ENCODE measurements at regions of chr16 and their contacts with region 1.

Region 1: GRCh38 chr16:68244903-68245853 is at the start of gene PLA2G15:
- DNase-seq: peak; percentile 98
- ATAC-seq: peak; percentile 97
- H3K4me3 ChIP-seq: peak within 1 kb of the TSS; percentile 98
- H3K27ac ChIP-seq: peak within 1 kb of the TSS; percentile 74
- H3K4me1 ChIP-seq: peaks cover 22% of the 10 kb centered on the region
- H3K27me3 ChIP-seq: no peaks in the 10 kb centered on the region
- CTCF ChIP-seq: no peak
- total RNA-seq, gene PLA2G15: 30.4 TPM

Region 2: GRCh38 chr16:67979955-67980678 is 265.1 kb before region 1 on chr16 and contains the start of gene DPEP3:
- intact Hi-C with region 1: no loop called
- DNase-seq: no peak
- ATAC-seq: no peak
- H3K4me3 ChIP-seq: no peak within 1 kb of the TSS
- H3K27ac ChIP-seq: no peak within 1 kb of the TSS
- H3K4me1 ChIP-seq: peaks cover 13% of the 10 kb centered on the region
- H3K27me3 ChIP-seq: no peaks in the 10 kb centered on the region
- CTCF ChIP-seq: peak; percentile 21
- total RNA-seq, gene DPEP3: not detected

Region 3: GRCh38 chr16:69132424-69133252 is 887.5 kb after region 1 on chr16 and contains the starts of genes CHTF8 and UTP4:
- intact Hi-C with region 1: loop called (anchors 10 kb)
- DNase-seq: peak; percentile 95
- ATAC-seq: peak; percentile 96
- H3K4me3 ChIP-seq: peak within 1 kb of the TSS; percentile 87
- H3K27ac ChIP-seq: peak within 1 kb of the TSS; percentile 89
- H3K4me1 ChIP-seq: peaks cover 20% of the 10 kb centered on the region
- H3K27me3 ChIP-seq: no peaks in the 10 kb centered on the region
- CTCF ChIP-seq: no peak
- total RNA-seq, gene CHTF8: 97.3 TPM
- total RNA-seq, gene UTP4: 36.5 TPM

Region 4: DNA sequence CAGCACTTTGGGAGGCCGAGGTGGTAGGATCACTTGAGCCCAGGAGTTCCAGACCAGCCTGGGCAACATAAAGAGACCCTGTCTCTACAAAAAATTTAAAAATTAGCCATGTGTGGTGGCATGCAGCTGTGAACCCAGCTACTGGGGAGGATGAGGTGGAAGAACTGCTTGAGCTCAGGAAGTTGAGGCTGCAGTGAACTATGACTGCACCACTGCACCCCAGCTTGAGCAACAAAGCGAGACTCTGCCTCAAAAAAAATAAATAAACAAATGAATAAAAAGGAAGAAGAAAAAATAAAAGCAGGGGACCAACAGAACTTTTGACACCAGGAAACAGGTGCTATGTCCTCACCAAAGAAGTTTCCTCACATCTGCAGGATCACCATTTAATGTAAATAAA is 1126.4 kb after region 1 on chr16:
- intact Hi-C with region 1: no loop called
- DNase-seq: no peak
- ATAC-seq: no peak
- H3K4me3 ChIP-seq: no peak overlapping the region
- H3K27ac ChIP-seq: no peak overlapping the region
- H3K4me1 ChIP-seq: no peaks in the 10 kb centered on the region
- H3K27me3 ChIP-seq: no peaks in the 10 kb centered on the region
- CTCF ChIP-seq: no peak

Measured in upper lobe of right lung (tissue), 1 donor.